Activated CD4-positive, alpha-beta memory T cell treated with anti-CD3 and anti-CD28 coated beads for 36 hours (primary cell): ENCODE measurements at regions of chr4 and their contacts with region 1.

Region 1: DNA sequence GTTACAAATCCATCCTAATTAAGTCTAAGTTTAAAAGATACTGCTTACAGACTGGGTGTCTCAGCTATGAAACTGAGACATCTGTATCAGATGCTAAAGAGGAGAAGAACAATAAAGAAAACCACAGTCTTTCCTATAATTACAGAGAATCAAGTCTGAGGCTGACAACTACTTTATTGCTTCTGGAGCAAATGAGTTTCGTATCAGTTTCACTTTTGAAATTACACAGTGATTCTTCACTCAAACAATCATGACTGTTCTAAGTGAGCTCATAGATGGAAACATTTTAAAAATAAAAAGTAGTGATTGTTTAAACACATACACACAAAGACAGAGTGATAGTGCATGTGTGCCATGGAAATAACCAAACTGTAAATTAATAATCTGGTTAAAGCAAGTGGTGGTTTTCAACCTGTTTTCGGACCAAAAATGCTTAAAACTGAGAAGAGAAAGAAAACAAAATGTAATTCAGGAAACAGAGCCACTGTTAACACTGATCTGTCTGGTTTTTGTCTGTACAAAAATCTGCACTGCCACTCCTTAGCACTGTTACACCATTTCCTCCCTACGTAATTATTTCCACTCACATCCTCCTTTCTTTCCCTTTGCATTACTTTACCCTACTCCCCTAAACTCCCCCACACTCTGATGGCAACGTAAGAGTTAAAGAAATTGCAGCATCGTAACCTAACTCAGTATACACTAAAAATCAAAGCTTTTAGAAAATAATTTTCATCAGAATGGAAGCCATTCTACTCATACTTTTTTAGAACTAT is 12.5 kb downstream of the RFC1 start:
- DNase-seq: no peak
- H3K4me3 Mint-ChIP-seq: peak overlapping the region; percentile 60
- H3K27ac Mint-ChIP-seq: peak overlapping the region; percentile 94
- H3K4me1 Mint-ChIP-seq: peaks cover 75% of the 10 kb centered on the region
- H3K27me3 Mint-ChIP-seq: no peaks in the 10 kb centered on the region

Region 2: DNA sequence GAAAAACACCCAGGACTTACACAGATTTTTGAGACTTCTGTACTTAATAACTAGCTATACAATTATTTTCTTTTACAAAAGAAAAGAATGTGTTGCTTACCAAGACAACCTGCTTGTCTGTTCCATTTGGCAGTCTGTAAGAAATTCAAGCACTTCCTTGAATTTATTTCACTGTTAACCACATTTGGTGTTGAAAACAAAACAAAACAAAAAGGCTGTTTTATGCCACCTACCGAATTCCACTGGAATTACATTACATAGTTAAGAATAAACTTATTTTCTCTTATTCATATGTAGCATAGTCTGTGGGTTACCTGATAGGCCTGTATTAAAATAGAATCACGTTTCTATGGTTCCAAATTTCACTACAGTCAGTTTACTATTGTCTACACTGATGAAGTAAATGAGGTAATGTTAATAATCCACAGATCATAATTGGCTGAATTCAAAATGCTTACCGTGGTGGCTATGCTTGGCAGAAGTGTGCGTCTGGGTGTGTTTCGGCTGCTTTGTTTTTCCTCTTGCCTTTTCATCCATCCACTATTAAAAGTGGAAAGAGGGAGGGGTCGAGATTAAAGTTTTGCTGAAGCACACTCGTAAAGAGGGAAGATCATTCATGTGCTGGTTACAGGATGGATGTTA is 548.9 kb before region 1 on chr4 and contains the start of gene TLR1:
- CTCF ChIA-PET with region 1: no interaction called
- POLR2A ChIA-PET with region 1: no interaction called
- intact Hi-C with region 1: loop called (anchors 1 kb)
- DNase-seq: peak; percentile 24
- H3K4me3 Mint-ChIP-seq: peak within 1 kb of the TSS; percentile 76
- H3K27ac Mint-ChIP-seq: peak within 1 kb of the TSS; percentile 91
- H3K4me1 Mint-ChIP-seq: peaks cover 35% of the 10 kb centered on the region
- H3K27me3 Mint-ChIP-seq: no peaks in the 10 kb centered on the region
- total RNA-seq, gene TLR1: 1.5 to 1.8 TPM

Region 3: GRCh38 chr4:38980903-38981676 is 372.6 kb before region 1 on chr4:
- CTCF ChIA-PET with region 1: no interaction called
- POLR2A ChIA-PET with region 1: interaction called, 4 read pairs
- intact Hi-C with region 1: loop called (anchors 10 kb)
- DNase-seq: peak; percentile 56
- H3K4me3 Mint-ChIP-seq: peak overlapping the region; percentile 36
- H3K27ac Mint-ChIP-seq: peak overlapping the region; percentile 93
- H3K4me1 Mint-ChIP-seq: peaks cover 64% of the 10 kb centered on the region
- H3K27me3 Mint-ChIP-seq: no peaks in the 10 kb centered on the region

Region 4: GRCh38 chr4:39181905-39182638 is 171.6 kb before region 1 on chr4 and contains the start of gene WDR19:
- CTCF ChIA-PET with region 1: no interaction called
- POLR2A ChIA-PET with region 1: no interaction called
- intact Hi-C with region 1: loop called (anchors 1 kb)
- DNase-seq: peak; percentile 99
- H3K4me3 Mint-ChIP-seq: no peak within 1 kb of the TSS
- H3K27ac Mint-ChIP-seq: no peak within 1 kb of the TSS
- H3K4me1 Mint-ChIP-seq: peaks cover 5% of the 10 kb centered on the region
- H3K27me3 Mint-ChIP-seq: no peaks in the 10 kb centered on the region
- total RNA-seq, gene WDR19: 16.4 to 17.9 TPM

Region 5: GRCh38 chr4:39255266-39255665 is 98.4 kb before region 1 on chr4:
- CTCF ChIA-PET with region 1: no interaction called
- POLR2A ChIA-PET with region 1: no interaction called
- intact Hi-C with region 1: no loop called
- DNase-seq: no peak
- H3K4me3 Mint-ChIP-seq: no peak overlapping the region
- H3K27ac Mint-ChIP-seq: no peak overlapping the region
- H3K4me1 Mint-ChIP-seq: no peaks in the 10 kb centered on the region
- H3K27me3 Mint-ChIP-seq: no peaks in the 10 kb centered on the region

Region 6: GRCh38 chr4:39446751-39447573 is 93.3 kb after region 1 on chr4:
- CTCF ChIA-PET with region 1: interaction called, 3 read pairs
- POLR2A ChIA-PET with region 1: interaction called, 4 read pairs
- intact Hi-C with region 1: loop called (anchors 1 kb)
- DNase-seq: peak; percentile 67
- H3K4me3 Mint-ChIP-seq: peak overlapping the region; percentile 32
- H3K27ac Mint-ChIP-seq: no peak overlapping the region
- H3K4me1 Mint-ChIP-seq: peaks cover 33% of the 10 kb centered on the region
- H3K27me3 Mint-ChIP-seq: no peaks in the 10 kb centered on the region

Region 7: DNA sequence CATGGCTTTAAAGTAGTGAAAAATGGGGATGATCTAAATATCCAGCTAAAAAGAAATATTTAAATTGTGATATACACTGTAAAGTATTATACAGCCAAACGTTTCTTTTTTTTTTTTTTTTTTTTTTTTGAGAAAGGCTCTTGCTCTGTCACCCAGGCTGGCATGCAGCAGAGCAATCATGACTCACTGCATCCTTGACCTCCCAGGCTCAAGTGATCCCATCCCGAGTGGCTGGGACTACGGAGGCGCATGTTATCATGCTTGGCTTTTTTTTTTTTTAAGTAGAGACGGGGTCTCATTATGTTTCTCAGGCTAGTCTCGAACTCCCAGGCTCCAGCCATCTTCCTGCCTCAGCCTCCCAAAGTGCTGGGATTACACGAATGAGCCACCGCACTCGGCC is 267.9 kb after region 1 on chr4:
- CTCF ChIA-PET with region 1: no interaction called
- POLR2A ChIA-PET with region 1: no interaction called
- intact Hi-C with region 1: loop called (anchors 1 kb)
- DNase-seq: no peak
- H3K4me3 Mint-ChIP-seq: no peak overlapping the region
- H3K27ac Mint-ChIP-seq: no peak overlapping the region
- H3K4me1 Mint-ChIP-seq: peaks cover 9% of the 10 kb centered on the region
- H3K27me3 Mint-ChIP-seq: no peaks in the 10 kb centered on the region